ENCODE measurements at regions of chr10 and their contacts with region 1.

Region 1: GRCh38 chr10:133309111-133309719 is 501 bp downstream of the ZNF511 start:
- DNase-seq: peak; percentile 90 to 96 (median 95)
- H3K4me3 ChIP-seq: peak overlapping the region; percentile 97
- H3K27ac ChIP-seq: peak overlapping the region; percentile 84 to 99
- H3K4me1 ChIP-seq: peaks cover 14% of the 10 kb centered on the region
- H3K27me3 ChIP-seq: no peaks in the 10 kb centered on the region
- CTCF ChIP-seq: no peak
- EP300 ChIP-seq: no peak
- POLR2A ChIP-seq: no peak

Region 2: DNA sequence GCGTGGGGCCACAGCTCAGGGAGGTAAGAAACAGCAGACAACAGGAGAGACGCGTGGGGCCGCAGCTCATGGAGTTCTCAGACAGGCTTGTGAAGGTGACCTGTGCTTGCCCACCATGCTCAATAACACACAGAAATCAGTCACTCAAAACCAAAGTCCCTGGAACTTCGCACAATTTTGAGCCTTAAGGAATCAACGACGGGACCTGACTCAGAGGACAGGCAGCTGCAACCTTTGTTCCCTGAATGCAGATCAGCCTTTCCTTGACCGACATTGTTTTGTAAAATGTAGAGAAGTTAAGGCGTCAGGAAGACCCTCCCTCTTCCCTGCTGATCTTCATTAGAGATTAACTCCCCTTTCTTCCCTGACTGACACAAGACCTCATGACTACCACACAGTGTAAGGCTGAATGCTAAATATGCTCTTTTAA is 157.7 kb before region 1 on chr10:
- intact Hi-C with region 1: no loop called
- DNase-seq: no peak
- H3K4me3 ChIP-seq: no peak overlapping the region
- H3K27ac ChIP-seq: no peak overlapping the region
- H3K4me1 ChIP-seq: no peaks in the 10 kb centered on the region
- H3K27me3 ChIP-seq: no peaks in the 10 kb centered on the region
- CTCF ChIP-seq: no peak
- EP300 ChIP-seq: no peak
- POLR2A ChIP-seq: no peak

Region 3: DNA sequence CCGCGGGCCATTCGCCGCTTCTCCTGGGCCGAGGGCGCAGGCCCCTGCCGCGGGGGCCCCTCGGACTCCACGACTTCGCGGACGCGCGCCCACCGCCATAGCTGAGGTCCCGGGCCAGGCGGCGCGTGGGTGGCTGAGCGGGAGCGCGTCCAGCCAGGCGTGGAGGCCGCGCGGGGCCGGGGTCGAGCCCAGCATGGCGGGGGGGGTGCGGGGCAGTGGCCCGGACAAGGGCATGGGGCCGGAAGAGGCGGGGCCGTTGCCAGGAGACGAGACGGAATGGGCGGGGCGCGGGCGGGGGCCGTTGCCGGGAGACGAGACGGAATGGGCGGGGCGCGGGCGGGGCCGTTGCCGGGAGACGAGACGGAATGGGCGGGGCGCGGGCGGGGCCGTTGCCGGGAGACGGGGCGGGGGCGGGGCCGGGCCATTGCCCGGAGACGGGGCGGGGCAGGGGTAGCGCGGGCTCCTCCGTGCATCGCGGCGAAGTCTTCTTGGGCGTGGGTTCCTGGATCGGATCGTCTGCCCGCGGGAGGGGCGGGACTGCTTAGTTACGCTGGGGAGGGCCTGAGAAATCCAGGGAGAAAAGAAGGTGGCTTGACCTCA is 47.4 kb before region 1 on chr10:
- intact Hi-C with region 1: loop called in 2 of 4 experiments (anchors 2 to 5 kb)
- DNase-seq: peak; percentile 90 to 97 (median 94)
- H3K4me3 ChIP-seq: peak overlapping the region; percentile 79
- H3K27ac ChIP-seq: peak overlapping the region; percentile 95 to 97
- H3K4me1 ChIP-seq: peaks cover 7% of the 10 kb centered on the region
- H3K27me3 ChIP-seq: no peaks in the 10 kb centered on the region
- CTCF ChIP-seq: no peak
- EP300 ChIP-seq: no peak
- POLR2A ChIP-seq: peak; percentile 45

Region 4: GRCh38 chr10:133378251-133379096 is 69.3 kb after region 1 on chr10:
- intact Hi-C with region 1: loop called in 1 of 4 experiments (anchors 5 kb)
- DNase-seq: peak; percentile 68 to 82 (median 80)
- H3K4me3 ChIP-seq: peak overlapping the region; percentile 79
- H3K27ac ChIP-seq: peak overlapping the region in 1 of 2 donors; percentile 80
- H3K4me1 ChIP-seq: peaks cover 5% of the 10 kb centered on the region
- H3K27me3 ChIP-seq: no peaks in the 10 kb centered on the region
- CTCF ChIP-seq: no peak
- EP300 ChIP-seq: no peak
- POLR2A ChIP-seq: no peak